CD8-positive, alpha-beta T cell (primary cell): ENCODE measurements at regions of chr18 and their contacts with region 1.

Region 1: DNA sequence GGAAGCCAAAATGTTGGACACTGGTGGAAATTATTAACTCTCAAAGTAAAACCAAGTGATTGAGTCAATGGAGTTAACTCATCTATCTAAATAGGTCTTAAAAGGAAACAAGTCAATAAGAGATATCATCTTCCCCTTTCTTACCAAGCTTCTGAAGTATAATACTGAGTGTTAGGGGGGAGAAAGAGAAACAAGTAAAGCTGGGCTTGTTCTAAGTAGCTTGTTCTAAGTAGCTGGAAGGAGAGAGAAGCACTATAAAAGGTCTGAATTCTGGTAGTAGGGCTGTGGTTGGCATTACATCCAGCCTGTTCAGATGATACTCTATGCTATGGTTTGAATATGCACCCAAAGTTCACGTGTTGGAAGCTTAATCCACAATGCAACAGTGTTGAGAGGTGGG is 26.8 kb downstream of the YES1 start:
- DNase-seq: no peak
- ATAC-seq: no peak
- H3K4me3 ChIP-seq: no peak overlapping the region
- H3K4me3 Mint-ChIP-seq: no peak overlapping the region
- H3K27ac ChIP-seq: no peak overlapping the region
- H3K27ac Mint-ChIP-seq: no peak overlapping the region
- H3K4me1 ChIP-seq: peaks cover 22% of the 10 kb centered on the region
- H3K4me1 Mint-ChIP-seq: peaks cover 51% of the 10 kb centered on the region
- H3K27me3 ChIP-seq: no peaks in the 10 kb centered on the region
- H3K27me3 Mint-ChIP-seq: no peaks in the 10 kb centered on the region
- CTCF ChIP-seq: no peak

Region 2: GRCh38 chr18:754666-755065 is 30.6 kb before region 1 on chr18:
- CTCF ChIA-PET with region 1: no interaction called
- POLR2A ChIA-PET with region 1: no interaction called
- intact Hi-C with region 1: loop called in 1 of 2 experiments (anchors 5 kb)
- DNase-seq: no peak
- ATAC-seq: no peak
- H3K4me3 ChIP-seq: no peak overlapping the region
- H3K4me3 Mint-ChIP-seq: no peak overlapping the region
- H3K27ac ChIP-seq: no peak overlapping the region
- H3K27ac Mint-ChIP-seq: no peak overlapping the region
- H3K4me1 ChIP-seq: no peaks in the 10 kb centered on the region
- H3K4me1 Mint-ChIP-seq: peaks cover 5% of the 10 kb centered on the region
- H3K27me3 ChIP-seq: no peaks in the 10 kb centered on the region
- H3K27me3 Mint-ChIP-seq: no peaks in the 10 kb centered on the region
- CTCF ChIP-seq: no peak

Region 3: GRCh38 chr18:805008-805754 is 19.9 kb after region 1 on chr18:
- CTCF ChIA-PET with region 1: no interaction called
- POLR2A ChIA-PET with region 1: interaction called, 4 read pairs
- intact Hi-C with region 1: loop called in 1 of 2 experiments (anchors 2 kb)
- DNase-seq: peak in 2 of 9 experiments; percentile 11 to 30
- ATAC-seq: no peak
- H3K4me3 ChIP-seq: peak overlapping the region; percentile 8 to 9
- H3K4me3 Mint-ChIP-seq: peak overlapping the region; percentile 76
- H3K27ac ChIP-seq: peak overlapping the region in 1 of 2 experiments; percentile 34
- H3K27ac Mint-ChIP-seq: peak overlapping the region; percentile 45
- H3K4me1 ChIP-seq: peaks cover 58% of the 10 kb centered on the region
- H3K4me1 Mint-ChIP-seq: peaks cover 72% of the 10 kb centered on the region
- H3K27me3 ChIP-seq: no peaks in the 10 kb centered on the region
- H3K27me3 Mint-ChIP-seq: no peaks in the 10 kb centered on the region
- CTCF ChIP-seq: no peak